Posterior cingulate gyrus (tissue), 11 donors: ENCODE measurements at regions of chr7 and their contacts with region 1.

Region 1: DNA sequence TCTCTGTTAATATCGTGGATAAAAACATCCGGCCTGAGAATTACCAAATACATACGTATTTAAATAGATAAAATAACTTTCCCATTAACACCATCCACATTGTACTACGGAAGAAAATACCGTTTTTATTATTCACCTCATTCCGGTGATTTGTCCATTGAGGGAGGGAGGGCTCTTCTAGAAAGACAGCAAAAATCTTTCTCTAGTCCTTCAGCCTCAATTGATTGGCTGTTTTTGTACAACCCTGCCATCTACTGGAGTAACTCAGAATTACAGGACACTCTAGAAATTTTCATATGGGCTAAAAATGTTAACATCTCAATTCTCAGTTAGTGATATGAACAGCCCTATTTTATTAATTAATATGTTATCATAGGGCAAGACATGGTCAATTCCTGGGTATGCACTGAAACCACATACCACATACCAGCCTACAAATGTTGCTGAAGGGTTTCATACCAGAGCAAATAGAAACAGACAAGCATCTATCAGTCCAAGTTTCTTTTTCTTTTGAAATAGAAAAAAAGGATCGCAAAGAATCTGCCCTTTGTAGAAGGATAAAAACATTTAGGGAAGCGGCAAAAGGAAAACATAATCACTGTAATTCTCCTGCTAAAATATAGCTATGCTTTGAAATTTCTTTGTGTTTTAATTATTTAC is 55.8 kb upstream of the CDCA7L start:
- DNase-seq: no peak

Region 2: DNA sequence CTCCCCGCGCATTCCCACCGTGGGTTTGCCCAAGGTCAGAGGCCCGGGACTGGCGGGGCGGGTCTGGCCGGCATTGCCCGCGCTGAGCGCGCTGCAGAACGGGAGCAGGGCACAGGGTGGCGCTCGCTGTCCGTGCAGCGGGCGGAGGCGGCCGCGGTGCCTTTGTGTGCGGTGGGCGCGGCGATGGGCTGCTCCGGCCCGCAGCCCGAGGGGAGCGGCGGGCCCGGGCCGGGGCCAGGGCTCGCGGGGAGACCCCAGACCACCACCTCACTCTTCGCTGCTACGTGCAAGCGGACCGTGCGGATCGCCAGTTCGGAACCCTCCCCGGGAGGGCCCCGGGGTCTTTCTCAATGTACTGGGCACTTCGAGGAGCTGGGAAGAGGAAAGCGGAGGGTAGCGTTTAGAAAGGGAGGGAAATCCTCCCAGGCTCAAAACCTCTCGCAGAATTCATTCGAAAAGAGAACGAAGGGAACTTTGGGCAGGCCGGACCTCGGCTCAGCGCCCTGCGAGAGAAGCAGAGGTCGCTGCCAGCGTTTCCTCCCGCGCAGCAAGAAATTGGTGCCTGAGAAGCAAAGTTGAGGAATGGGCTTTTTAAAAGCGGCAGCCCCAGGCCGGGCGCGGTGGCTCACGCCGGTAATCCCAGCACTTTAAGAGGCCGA is 1223.3 kb before region 1 on chr7:
- intact Hi-C with region 1: loop called (anchors 10 kb)
- DNase-seq: peak in 7 of 10 donors; percentile 31 to 92 (median 59)

Region 3: DNA sequence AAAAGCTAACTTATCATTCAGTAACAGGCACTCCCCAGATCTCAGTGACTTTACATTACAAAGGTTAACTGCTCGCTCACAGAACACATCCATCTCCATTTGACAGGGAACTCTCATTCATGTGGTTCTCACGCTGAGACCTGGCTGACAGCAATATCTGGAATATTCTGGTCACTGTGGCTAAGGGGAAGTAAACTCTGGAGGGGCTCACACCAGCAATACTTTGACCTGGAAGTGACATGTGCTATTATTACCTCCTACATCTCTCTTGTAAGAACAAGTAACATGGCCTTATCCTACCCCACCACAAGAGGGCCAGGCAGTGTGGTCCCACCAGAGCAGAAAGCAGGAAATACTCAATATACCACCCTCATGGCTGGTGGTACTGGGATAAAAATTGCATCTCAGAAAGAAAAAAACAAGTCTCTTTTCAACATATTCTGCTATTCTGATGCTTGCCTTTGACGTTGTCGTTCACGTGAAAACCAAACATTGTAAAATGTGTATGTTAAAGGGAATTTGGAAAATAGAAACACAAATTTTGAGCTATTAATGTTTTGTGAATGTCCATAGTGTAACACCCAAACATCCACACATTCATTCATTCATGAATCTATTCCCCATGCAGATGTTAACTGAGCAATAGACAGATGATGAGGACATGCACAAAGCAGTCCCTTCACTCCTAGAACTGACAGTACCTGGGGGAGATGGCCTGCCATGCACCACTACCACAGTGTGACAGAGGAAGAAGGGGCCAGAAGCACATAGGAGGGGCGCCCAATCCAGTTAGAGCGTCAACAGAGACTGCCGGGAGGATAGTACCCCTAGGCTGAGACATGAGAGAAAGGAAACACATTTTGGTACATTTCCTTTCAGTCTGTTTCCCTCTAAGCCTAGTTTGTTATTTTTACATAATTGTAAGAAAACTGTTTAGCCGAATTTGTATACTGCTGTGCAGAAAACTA is 739.6 kb before region 1 on chr7:
- intact Hi-C with region 1: loop called (anchors 2 kb)
- DNase-seq: peak in 6 of 10 donors; percentile 7 to 75 (median 18)

Region 4: DNA sequence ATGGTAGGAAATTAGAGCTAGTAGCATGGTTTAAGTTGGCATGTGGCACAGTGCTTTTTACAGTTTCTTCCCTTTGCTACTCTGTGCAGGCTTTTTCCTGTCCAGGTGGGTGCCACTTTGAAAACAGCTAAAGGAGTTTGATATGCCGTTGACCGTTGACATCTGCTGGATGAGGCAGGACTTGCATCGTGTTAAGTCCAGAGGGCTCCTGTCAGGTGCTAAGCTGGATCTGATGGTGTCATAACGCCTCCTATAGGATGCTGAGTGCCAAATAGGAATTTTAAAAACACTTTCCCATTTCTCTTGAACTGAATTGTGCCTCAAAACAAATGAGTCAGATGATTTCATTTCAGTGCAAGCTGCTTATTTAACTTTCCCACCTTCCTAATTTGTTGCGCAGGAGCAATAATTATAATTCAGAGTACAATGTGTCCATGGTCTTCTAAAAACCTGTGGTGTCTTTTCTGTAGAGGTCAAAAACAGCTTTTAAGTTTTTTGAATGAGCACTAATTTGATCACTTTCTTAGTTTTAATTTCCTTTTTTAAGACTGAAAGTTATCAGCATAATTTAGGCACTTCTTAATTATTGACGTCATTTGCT is 234.1 kb before region 1 on chr7:
- intact Hi-C with region 1: loop called (anchors 5 kb)
- DNase-seq: peak in 5 of 10 donors; percentile 7 to 84 (median 27)

Region 5: DNA sequence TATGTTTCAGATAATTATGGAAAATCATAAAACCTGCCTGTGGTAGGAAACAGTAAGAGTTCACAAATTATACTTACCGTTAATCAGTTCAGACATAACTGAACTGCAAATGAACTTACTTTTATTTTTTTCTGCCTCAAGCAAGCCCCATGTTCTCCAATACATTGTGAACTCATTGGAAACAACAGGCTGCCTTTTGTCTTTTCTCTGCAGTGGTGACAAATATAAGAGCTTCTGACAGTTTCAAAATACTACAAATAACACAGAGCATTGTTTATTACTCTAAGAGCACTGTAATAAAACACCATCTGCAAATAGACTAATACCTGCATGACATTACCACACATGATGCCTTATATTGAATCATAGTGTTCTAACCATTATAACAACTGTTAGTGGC is 38.2 kb after region 1 on chr7:
- intact Hi-C with region 1: no loop called
- DNase-seq: no peak

Region 6: DNA sequence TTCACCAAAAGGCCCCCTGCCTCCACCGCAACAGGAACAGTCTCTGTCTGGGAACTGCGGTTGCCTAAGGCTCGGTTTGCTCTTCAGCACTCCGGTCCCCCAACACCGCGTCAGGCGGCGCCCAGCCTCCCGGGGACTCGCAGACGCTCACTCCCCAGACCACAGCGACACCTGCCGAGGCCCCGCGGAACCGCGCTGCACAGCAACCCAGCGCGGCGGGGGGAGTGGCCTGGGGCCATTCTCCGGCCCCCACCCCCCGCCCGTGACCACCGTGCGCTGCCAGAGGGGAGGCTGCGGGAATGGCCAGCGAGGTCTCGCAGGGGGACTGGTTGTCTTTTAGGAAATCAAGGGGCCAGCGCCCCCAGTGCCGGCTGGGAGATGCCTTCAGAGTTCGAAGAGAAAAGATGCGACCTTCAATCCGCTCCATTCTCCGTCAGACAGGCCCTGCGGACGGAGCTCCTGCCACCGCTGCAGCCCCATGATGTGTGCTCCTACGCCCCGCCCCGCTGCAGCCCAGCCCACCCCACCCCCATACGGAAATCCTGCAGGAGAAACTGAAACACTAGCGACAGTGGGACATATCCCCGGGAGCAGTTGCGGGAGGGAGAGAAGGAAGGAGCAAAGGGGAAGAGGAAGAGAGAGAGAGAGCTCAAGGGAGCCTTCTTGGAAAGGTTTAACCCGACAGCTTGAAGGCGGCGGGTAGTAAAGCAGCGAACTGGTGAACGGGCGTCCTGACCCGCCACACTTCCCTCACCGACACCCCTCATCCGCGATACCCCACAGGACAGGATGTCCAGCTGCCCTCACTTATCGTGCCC is 81.6 kb after region 1 on chr7:
- intact Hi-C with region 1: loop called (anchors 10 kb)
- DNase-seq: peak; percentile 87 to 99 (median 95)

Region 7: DNA sequence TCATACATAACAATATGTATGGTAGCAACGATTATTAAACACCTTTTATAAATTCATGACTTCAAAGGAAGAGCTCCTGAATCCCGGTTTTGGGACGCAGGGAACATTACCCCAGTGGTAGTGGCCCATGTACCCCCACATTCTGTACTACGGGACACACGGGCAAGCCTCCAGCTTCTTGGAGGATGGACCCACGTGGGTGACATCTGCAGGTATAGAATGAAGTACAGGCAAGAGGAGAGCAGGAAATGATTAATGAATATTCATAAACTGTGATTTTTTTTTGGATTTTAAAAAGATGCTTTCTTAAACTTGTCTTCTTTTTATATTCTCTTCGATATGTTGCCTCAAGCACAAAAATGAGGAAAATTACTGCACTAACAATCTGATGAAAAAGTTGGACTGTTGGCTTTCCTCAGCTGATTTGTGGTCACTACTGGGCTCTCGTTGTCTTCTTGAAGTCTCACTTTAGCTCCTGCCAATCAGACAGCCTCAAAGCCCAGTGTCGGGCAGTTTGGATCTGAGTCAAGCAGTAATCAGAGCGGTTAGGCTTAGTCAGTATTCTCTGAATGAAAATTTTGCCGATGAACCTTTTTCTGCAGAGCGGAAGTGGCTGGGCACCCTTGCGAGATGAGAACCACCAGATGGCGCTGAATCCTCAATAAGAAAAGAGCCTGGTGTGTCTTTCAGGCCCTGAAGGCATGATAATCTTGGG is 101.9 kb after region 1 on chr7:
- intact Hi-C with region 1: no loop called
- DNase-seq: peak; percentile 53 to 95 (median 74)